Activated T-helper 1 cell treated with anti-CD3 and anti-CD28 coated beads, Interleukin-12 subunit alpha, Interleukin-12 subunit beta, Interleukin-2, Interleukin-4 antibody, amounts not matched to agents 30 ng/mL and 10 ng/mL and 1 ng/mL, durations not matched to agents 14 hours and 24 hours and 36 hours (primary cell): ENCODE measurements at regions of chr5 and their contacts with region 1.

Region 1: GRCh38 chr5:168579488-168580226 is 489 bp upstream of the PANK3 start:
- DNase-seq: peak; percentile 95
- H3K4me3 Mint-ChIP-seq: peak overlapping the region; percentile 88
- H3K27ac Mint-ChIP-seq: peak overlapping the region; percentile 96
- H3K4me1 Mint-ChIP-seq: peaks cover 46% of the 10 kb centered on the region
- H3K27me3 Mint-ChIP-seq: peaks cover 3% of the 10 kb centered on the region

Region 2: DNA sequence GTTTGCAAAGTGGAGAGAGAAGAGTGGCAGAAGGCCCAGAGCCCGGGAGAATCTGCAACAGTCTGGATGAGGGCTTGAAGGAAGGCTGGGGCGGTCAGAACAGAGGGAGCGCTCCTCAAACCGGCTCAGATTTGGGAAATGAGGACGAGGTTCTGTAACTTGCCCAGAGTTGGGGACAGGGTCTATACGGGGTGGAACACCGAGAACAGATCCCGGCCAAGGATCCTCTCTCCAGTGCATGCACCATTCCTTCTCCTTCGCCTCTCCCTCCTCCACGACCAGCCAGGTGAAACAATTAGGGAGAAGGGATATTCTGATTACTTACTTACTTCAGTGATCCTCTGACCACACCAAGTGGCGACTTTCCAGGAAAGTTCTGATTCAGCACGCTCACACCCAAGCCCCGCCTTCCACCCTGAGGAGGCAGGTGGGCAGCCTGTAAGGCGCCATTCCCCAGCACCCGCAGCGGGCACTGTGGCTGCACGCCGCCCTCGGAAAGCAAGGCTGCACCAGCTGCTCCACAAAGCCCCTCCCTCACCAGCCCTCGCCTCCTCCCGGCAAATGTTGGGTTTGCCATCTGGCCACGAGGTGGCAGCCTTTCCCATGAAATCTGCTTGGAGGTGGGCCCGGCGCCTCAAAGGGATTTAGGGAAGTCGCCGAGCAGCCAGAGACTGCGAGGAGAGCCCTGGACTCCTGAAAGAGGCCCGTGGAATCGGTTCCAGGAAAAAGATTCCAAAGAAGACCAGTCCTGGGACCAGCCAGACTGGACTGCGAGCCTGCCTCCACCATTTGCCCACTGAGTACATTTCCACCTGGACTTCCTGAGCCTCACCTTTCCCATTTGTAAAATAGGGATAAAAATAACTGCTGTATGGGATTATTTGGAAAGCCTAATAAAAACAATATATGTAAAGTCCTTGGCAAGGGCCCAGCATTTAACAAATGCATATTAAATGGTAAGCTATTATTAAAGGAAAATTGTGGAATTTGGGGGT is 310.4 kb before region 1 on chr5:
- intact Hi-C with region 1: loop called (anchors 2 kb)
- DNase-seq: peak; percentile 48
- H3K4me3 Mint-ChIP-seq: no peak overlapping the region
- H3K27ac Mint-ChIP-seq: no peak overlapping the region
- H3K4me1 Mint-ChIP-seq: peaks cover 6% of the 10 kb centered on the region
- H3K27me3 Mint-ChIP-seq: peaks cover 17% of the 10 kb centered on the region

Region 3: GRCh38 chr5:168486136-168486879 is 93.3 kb before region 1 on chr5 and contains the start of gene RARS1:
- intact Hi-C with region 1: loop called (anchors 1 kb)
- DNase-seq: peak; percentile 86
- H3K4me3 Mint-ChIP-seq: peak within 1 kb of the TSS; percentile 100
- H3K27ac Mint-ChIP-seq: peak within 1 kb of the TSS; percentile 86
- H3K4me1 Mint-ChIP-seq: peaks cover 38% of the 10 kb centered on the region
- H3K27me3 Mint-ChIP-seq: no peaks in the 10 kb centered on the region
- total RNA-seq, gene RARS1: 137 and 145 TPM in 2 replicates

Region 4: DNA sequence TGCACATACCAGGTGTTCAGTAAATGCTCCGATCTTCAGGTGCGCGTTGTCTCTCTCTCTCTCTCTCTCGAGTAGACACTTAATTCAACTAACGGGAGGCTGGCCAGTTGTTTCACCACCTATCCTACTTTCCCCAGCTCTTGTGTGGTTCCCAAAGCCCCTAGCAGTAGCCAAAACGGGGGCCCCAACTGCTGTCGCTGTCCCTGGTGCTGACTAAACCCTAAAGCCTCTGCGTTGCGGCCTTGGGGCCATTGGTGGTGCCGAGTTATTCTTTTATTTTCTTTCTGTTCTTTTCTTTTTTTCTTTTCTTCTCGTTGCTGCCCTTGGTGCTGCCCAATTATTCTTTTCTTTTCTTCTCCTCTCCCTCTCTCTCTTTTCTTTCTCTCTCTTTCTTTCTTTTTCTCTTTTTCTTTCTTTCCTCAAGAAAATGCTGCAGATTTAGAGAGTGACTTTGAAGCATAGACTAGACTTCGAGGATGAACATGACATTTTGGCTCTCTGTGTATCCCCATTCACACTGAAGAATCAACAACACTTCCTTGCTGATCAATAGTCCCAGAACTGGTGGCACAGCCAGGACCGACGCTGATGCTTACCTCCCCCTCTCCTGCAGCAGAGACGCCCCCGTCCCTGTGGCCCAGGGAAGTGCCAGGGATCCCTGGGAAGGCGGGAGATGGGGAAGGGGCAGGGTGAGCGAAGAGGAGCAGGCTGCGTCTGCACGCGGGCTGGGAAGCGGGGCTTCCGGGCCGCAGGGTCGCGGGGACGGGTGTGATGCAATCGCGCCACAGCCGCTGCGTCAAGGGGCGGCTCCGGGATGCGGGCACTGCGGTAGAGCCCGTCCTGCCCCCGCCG is 50.9 kb before region 1 on chr5 and contains the start of gene FBLL1:
- intact Hi-C with region 1: loop called (anchors 5 kb)
- DNase-seq: no peak
- H3K4me3 Mint-ChIP-seq: peak within 1 kb of the TSS; percentile 57
- H3K27ac Mint-ChIP-seq: no peak within 1 kb of the TSS
- H3K4me1 Mint-ChIP-seq: peaks cover 5% of the 10 kb centered on the region
- H3K27me3 Mint-ChIP-seq: peaks cover 48% of the 10 kb centered on the region
- total RNA-seq, gene FBLL1: 0.13 TPM in 1 of 2 replicates, not detected in the other

Region 5: GRCh38 chr5:169637085-169637548 is 1057.5 kb after region 1 on chr5 and contains the start of gene DOCK2:
- intact Hi-C with region 1: loop called (anchors 5 kb)
- DNase-seq: peak; percentile 68
- H3K4me3 Mint-ChIP-seq: peak within 1 kb of the TSS; percentile 86
- H3K27ac Mint-ChIP-seq: peak within 1 kb of the TSS; percentile 92
- H3K4me1 Mint-ChIP-seq: peaks cover 57% of the 10 kb centered on the region
- H3K27me3 Mint-ChIP-seq: no peaks in the 10 kb centered on the region
- total RNA-seq, gene DOCK2: 214 and 216 TPM in 2 replicates

Region 6: DNA sequence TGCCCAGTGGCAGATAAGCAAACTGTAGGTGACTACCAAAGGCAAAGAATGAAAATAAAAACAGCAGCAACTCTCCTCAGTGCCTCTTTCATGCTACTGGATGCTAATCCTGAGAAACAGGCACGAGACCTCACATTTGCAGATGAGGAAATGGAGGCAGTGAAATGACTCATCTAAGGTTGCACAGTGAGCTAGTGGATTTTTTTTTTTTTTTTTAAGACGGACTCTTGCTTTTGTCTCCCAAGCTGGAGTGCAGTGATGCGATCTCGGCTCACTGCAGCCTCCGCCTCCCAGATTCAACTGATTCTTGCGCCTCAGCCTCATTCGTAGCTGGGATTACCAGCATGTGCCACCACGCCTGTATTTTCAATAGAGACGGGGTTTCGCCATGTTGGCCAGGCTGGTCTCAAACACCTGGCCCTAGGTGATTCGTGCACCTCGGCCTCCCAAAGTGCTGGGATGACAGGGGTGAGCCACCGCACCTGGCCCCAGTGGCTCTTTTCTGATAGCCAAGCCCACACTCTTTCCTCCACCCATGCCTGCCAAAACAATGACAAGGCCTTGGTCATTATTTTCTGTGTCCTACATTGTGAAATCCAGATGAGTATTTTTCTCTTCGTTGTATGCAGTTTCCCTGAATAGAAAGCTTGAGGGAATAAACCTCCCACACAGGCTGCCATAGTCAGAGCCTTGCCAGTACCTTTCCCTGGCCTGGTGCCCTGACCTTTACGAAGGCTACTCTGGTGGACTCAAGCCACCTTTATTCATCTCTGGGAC is 1076.7 kb after region 1 on chr5:
- intact Hi-C with region 1: loop called (anchors 5 kb)
- DNase-seq: peak; percentile 35
- H3K4me3 Mint-ChIP-seq: peak overlapping the region; percentile 45
- H3K27ac Mint-ChIP-seq: peak overlapping the region; percentile 87
- H3K4me1 Mint-ChIP-seq: peaks cover 83% of the 10 kb centered on the region
- H3K27me3 Mint-ChIP-seq: no peaks in the 10 kb centered on the region